ENCODE measurements at regions of chr13 and their contacts with region 1.

Region 1: GRCh38 chr13:62629618-62630017 is 1214.0 kb upstream of the PCDH20 start:
- DNase-seq: no peak
- H3K4me3 ChIP-seq: no peak overlapping the region
- H3K27ac ChIP-seq: no peak overlapping the region
- H3K4me1 ChIP-seq: no peaks in the 10 kb centered on the region
- CTCF ChIP-seq: no peak

Region 2: GRCh38 chr13:62305756-62306155 is 323.9 kb before region 1 on chr13:
- CTCF ChIA-PET with region 1: no interaction called
- POLR2A ChIA-PET with region 1: no interaction called
- intact Hi-C with region 1: loop called (anchors 10 kb)
- DNase-seq: peak; percentile 58
- H3K4me3 ChIP-seq: peak overlapping the region; percentile 60
- H3K27ac ChIP-seq: peak overlapping the region; percentile 63
- H3K4me1 ChIP-seq: peaks cover 23% of the 10 kb centered on the region
- CTCF ChIP-seq: no peak

Region 3: DNA sequence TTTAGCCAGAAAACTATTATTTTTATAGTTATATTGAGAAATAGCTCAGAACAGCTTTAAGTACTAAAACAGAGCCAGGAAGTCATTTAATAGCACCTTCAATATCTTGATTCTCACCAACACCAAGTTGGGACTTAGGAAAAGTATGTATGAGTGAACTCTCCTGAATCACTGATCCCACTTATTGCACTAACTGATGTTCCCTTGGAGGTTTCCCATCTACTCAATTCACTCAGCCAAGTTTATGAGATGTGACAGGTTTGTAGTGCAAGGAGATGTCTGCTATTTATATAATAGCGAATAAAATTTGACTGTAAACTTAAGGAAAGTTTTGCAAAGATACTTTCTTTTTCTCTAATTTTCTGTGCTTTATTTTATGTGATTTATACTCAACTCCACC is 66.4 kb before region 1 on chr13:
- CTCF ChIA-PET with region 1: no interaction called
- POLR2A ChIA-PET with region 1: no interaction called
- intact Hi-C with region 1: no loop called
- DNase-seq: no peak
- H3K4me3 ChIP-seq: no peak overlapping the region
- H3K27ac ChIP-seq: no peak overlapping the region
- H3K4me1 ChIP-seq: no peaks in the 10 kb centered on the region
- CTCF ChIP-seq: no peak

Region 4: GRCh38 chr13:62595976-62596375 is 33.6 kb before region 1 on chr13:
- CTCF ChIA-PET with region 1: no interaction called
- POLR2A ChIA-PET with region 1: no interaction called
- intact Hi-C with region 1: no loop called
- DNase-seq: no peak
- H3K4me3 ChIP-seq: no peak overlapping the region
- H3K27ac ChIP-seq: no peak overlapping the region
- H3K4me1 ChIP-seq: no peaks in the 10 kb centered on the region
- CTCF ChIP-seq: no peak

Measured in OCI-LY7 (cell line).